Calu3 (cell line): ENCODE measurements at regions of chr12 and their contacts with region 1.

Region 1: GRCh38 chr12:106841510-106842302 is 67.2 kb downstream of the RIC8B start:
- DNase-seq: peak; percentile 60
- H3K4me3 Mint-ChIP-seq: no peak overlapping the region
- H3K27ac Mint-ChIP-seq: no peak overlapping the region
- H3K4me1 Mint-ChIP-seq: peaks cover 16% of the 10 kb centered on the region
- H3K27me3 Mint-ChIP-seq: no peaks in the 10 kb centered on the region
- CTCF ChIP-seq: peak; percentile 52

Region 2: GRCh38 chr12:106357549-106358395 is 483.9 kb before region 1 on chr12 and contains the start of gene POLR3B:
- CTCF ChIA-PET with region 1: interaction called, 15 read pairs
- intact Hi-C with region 1: no loop called
- DNase-seq: peak; percentile 97
- H3K4me3 Mint-ChIP-seq: peak within 1 kb of the TSS; percentile 84
- H3K27ac Mint-ChIP-seq: peak within 1 kb of the TSS; percentile 97
- H3K4me1 Mint-ChIP-seq: peaks cover 17% of the 10 kb centered on the region
- H3K27me3 Mint-ChIP-seq: no peaks in the 10 kb centered on the region
- CTCF ChIP-seq: peak; percentile 83
- total RNA-seq, gene POLR3B: 13.6 and 13.9 TPM in 2 replicates

Region 3: DNA sequence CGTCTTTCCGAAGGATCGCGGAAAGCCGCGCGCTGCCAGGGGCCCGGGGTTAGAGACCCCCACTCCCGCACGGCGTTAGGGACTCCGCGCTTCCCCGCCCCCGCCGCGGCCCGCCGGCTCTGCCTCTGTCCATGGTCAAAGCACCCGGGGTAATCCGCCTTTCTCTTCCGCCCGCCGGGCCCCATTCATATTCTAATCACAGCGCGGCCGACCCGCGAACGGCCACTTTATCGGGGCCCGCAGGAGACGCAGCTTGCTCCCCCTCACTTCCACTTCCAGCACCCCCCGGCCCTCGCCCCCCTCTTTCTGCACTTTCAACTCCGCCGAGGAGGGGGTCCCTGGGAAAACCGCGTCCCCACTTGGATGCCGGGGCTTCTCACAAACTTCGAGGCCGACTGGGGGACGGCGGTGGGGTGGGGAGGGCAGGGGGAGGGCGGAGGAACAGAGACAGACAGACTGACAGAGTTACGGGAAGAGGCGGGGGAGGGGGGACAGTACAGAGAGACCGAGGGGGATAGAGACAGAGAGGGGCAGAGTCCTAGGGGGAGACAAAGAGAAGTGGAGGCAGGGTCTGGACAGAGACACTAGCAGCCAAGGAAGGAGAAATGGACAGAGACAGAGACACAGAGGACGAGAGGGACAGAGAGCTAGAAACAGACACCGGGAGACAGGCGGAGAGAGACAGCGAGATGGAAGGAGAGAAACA is 260.0 kb before region 1 on chr12:
- CTCF ChIA-PET with region 1: no interaction called
- intact Hi-C with region 1: loop called (anchors 5 kb)
- DNase-seq: peak; percentile 43
- H3K4me3 Mint-ChIP-seq: peak overlapping the region; percentile 31
- H3K27ac Mint-ChIP-seq: no peak overlapping the region
- H3K4me1 Mint-ChIP-seq: peaks cover 26% of the 10 kb centered on the region
- H3K27me3 Mint-ChIP-seq: peaks cover 83% of the 10 kb centered on the region
- CTCF ChIP-seq: no peak

Region 4: DNA sequence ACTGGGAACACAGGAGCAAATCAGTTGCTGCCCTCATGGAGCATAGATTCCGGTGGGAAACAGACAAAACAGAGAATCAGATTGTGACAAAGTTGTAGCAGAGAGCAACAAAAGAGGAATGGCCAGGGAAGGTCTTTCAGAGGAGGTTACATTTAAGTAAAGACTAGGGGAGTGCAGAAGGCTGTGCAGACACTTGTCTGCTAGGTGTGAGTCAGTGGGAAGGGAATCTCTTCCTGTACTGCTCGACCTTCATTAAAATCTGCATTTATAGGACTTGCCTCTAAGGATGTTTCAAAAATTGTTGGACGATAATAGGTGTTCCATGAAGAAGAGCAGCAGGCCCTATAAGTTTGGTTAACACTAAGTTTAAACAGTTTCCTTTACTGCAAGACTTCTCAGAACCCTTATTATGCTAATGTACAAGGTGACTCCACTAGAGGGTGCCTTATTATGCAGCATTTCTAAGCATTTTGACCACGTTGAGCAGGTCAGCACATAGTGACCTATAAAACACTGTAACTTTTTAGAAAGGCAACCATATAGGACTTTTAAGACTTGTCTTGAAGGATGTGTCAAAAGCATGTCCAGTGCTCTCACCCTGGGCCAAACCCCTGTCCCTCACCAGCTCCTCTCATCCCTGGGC is 159.0 kb before region 1 on chr12:
- CTCF ChIA-PET with region 1: no interaction called
- intact Hi-C with region 1: loop called (anchors 2 kb)
- DNase-seq: no peak
- H3K4me3 Mint-ChIP-seq: no peak overlapping the region
- H3K27ac Mint-ChIP-seq: no peak overlapping the region
- H3K4me1 Mint-ChIP-seq: no peaks in the 10 kb centered on the region
- H3K27me3 Mint-ChIP-seq: no peaks in the 10 kb centered on the region
- CTCF ChIP-seq: peak; percentile 24

Region 5: DNA sequence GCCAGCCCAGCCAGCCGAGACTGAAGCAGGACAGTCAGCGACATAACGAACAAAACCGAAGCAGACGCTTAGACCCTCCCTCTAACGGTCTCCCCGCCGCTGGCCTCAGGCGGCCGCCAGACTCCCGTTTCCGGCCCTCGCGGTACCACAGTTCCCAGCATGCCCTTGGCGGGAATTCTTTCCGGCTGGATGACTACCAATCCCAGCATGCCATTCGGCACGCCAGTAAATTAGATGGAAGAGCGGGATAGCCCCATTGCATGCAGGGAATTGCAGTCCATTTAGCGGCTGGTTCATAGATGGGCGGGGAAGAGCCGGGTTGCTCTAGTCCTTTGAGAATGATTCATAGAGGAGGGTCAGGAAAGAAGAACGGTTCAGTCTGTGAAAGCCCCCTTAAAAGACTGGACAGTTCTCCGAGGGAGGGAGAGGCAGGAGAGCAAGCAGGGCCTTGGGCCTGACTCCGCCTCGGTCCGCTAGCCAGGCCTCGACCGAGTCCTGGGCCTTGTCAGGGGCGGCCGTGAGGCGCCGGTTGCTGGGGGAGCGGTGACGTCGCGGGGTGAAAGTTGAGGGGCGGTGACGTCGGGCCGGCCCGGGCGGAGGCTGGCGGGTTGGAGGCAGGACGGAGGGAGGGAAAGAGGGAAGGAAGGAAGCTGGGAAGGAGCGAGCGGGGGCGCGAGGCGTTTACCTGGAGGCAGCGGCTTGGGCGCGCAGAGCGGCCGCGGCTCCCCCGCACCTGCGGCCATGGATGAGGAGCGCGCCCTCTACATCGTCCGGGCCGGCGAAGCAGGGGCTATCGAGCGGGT is 67.5 kb before region 1 on chr12 and contains the start of gene RIC8B:
- CTCF ChIA-PET with region 1: no interaction called
- intact Hi-C with region 1: loop called (anchors 1 kb)
- DNase-seq: peak; percentile 98
- H3K4me3 Mint-ChIP-seq: peak within 1 kb of the TSS; percentile 95
- H3K27ac Mint-ChIP-seq: peak within 1 kb of the TSS; percentile 97
- H3K4me1 Mint-ChIP-seq: peaks cover 47% of the 10 kb centered on the region
- H3K27me3 Mint-ChIP-seq: no peaks in the 10 kb centered on the region
- CTCF ChIP-seq: no peak
- total RNA-seq, gene RIC8B: 28.5 and 30.9 TPM in 2 replicates